ENCODE measurements at regions of chr11 and their contacts with region 1.

Region 1: DNA sequence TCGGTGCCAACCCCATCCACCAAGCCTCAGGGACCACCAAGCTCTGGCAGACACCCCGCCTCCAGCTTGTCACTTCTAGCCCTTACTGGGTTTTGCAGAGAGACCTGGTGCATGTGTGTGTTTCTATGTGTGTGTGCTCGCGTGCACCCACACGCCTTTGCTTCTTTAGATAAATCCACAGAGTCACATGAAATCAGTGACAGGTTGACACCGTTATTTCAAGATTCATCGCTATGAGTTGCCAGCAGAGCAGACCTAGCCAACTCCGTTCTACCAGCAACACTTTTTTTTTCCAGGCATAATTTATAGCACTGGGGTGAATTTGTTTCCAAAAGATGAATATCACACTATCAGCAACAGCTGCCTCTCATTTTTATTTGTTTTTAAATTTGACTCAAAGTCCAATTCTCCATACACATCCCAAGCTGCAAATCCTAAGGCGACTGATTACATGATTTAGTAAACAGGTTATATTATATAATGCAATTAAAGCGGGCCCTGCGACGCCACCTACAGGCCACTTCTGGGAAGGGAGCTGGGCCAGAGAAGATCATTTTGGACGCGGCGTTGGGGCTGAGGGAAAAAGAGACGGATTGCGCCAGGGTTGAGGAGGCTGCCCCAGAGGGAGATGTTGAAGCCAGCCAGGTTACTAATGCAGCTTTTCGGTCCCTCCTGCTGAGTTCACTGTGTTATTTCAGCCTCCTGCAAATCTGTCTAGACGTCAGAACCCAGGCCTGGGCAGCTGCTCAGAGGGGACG is 150.5 kb downstream of the FEZ1 start:
- DNase-seq: peak; percentile 82
- ATAC-seq: peak; percentile 57
- H3K4me3 Mint-ChIP-seq: no peak overlapping the region
- H3K27ac Mint-ChIP-seq: no peak overlapping the region
- H3K4me1 Mint-ChIP-seq: peaks cover 57% of the 10 kb centered on the region
- H3K27me3 Mint-ChIP-seq: peaks cover 20% of the 10 kb centered on the region
- CTCF ChIP-seq: peak; percentile 77

Region 2: GRCh38 chr11:125111343-125112207 is 234.0 kb before region 1 on chr11 and contains the start of gene TMEM218:
- CTCF ChIA-PET with region 1: interaction called, 19 read pairs
- POLR2A ChIA-PET with region 1: no interaction called
- DNase-seq: peak; percentile 98
- ATAC-seq: peak; percentile 99
- H3K4me3 Mint-ChIP-seq: peak within 1 kb of the TSS; percentile 98
- H3K27ac Mint-ChIP-seq: peak within 1 kb of the TSS; percentile 98
- H3K4me1 Mint-ChIP-seq: peaks cover 14% of the 10 kb centered on the region
- H3K27me3 Mint-ChIP-seq: no peaks in the 10 kb centered on the region; the same call in 1 of the 2 replicates
- CTCF ChIP-seq: no peak
- total RNA-seq, gene TMEM218: 10.3 to 12.4 TPM (median 11.0 TPM) in 3 replicates

Region 3: DNA sequence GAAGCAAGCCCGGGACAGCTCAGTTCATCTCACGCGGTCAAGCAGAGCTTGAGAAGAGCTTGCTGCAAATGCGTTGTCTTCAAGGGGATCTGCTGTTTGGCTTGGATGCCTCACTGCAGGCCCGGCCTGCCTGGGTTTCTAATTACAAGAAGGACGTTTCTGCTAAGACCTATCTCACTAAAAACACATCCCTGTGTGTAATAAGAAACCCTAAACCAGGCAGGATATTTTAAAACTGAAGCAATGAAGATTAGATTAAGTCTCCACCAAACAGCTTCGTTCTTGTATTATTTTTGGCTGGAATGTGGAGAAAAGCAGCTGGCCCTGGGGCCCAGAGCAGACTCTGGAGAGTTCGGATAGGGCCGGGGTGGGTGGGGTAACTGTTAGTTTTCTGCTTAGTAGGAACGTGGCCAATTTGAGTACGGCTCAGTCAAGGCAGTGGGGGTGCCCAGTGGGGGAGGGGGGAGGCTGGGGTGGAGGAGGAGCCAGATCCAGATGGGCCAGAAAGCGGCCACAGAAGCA is 175.0 kb before region 1 on chr11:
- CTCF ChIA-PET with region 1: interaction called, 75 read pairs
- POLR2A ChIA-PET with region 1: no interaction called
- DNase-seq: no peak
- ATAC-seq: peak; percentile 14
- H3K4me3 Mint-ChIP-seq: no peak overlapping the region
- H3K27ac Mint-ChIP-seq: no peak overlapping the region
- H3K4me1 Mint-ChIP-seq: peaks cover 57% of the 10 kb centered on the region
- H3K27me3 Mint-ChIP-seq: peaks cover 76% of the 10 kb centered on the region
- CTCF ChIP-seq: no peak

Region 4: DNA sequence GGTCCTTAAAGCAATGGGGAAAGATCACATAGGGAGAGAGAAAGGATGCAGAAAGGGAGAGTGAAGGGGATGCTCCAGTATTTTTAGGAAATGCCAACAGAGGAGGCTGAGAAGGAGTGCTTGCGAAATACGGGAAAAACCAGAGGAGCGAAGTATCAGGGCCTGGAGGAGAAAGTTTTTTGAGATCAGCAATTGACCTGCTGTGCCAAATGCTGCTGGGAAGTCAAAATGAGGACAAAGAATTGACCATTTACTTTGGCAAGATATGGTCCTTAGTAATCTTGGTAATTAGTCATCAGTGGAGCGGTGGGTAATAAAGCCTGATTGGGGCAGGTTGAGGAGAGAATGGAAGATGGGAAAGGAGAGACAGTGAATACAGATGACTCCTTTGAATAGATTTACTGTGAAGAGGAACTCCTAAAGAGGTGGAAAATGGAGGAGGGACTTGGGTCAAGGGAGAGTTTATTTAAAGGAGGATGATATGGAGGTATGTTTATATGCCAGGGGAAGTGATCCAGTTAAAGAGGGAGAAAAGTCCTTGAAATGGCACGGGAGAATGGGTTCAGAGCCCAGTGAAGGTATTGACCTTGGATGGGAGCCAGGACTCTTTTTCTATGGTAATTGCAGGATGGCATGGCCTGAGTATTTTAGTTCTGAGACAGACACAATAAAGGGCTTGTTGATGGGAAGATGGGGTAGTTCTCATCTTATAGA is 69.5 kb before region 1 on chr11:
- CTCF ChIA-PET with region 1: interaction called, 12 read pairs
- POLR2A ChIA-PET with region 1: no interaction called
- DNase-seq: no peak
- ATAC-seq: no peak
- H3K4me3 Mint-ChIP-seq: no peak overlapping the region
- H3K27ac Mint-ChIP-seq: no peak overlapping the region
- H3K4me1 Mint-ChIP-seq: peaks cover 8% of the 10 kb centered on the region; the same call in 1 of the 2 replicates
- H3K27me3 Mint-ChIP-seq: no peaks in the 10 kb centered on the region
- CTCF ChIP-seq: no peak

Region 5: DNA sequence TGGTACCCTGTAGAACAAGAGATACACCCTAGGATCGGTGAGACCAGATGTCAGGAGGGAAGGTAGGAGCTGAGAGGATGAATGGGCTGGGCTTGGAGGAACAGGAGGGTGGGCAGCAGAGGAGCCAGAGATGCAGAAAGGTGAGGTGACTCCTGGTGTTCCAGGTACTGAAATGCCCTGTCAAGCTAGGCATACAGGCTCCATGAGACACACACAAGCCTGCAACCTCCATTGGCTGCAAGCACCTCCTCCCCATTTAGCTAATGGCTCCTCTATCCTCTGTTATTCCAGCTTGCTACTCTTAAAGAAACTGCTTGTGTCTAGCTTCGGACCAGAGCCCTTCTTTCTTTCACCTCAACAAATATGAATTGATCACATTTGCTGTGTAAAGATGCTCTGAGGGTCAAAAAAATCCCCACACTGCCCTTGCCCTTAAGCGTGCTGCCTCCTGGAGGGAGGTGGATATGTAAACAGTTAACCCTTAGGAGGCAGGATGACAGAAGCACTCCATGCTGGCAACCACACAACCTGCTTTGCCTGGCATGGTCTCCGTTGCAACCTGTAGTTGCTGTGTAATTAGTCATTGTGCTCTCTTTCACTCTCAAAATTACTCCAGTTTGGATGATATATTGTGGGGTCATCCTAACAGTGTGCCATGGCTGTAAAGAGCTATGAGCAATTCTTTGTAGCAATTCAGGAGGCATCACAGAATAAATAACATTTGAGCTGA is 25.1 kb before region 1 on chr11:
- CTCF ChIA-PET with region 1: interaction called, 37 read pairs
- POLR2A ChIA-PET with region 1: no interaction called
- DNase-seq: no peak
- ATAC-seq: peak; percentile 73
- H3K4me3 Mint-ChIP-seq: no peak overlapping the region
- H3K27ac Mint-ChIP-seq: no peak overlapping the region
- H3K4me1 Mint-ChIP-seq: peaks cover 13% of the 10 kb centered on the region
- H3K27me3 Mint-ChIP-seq: peaks cover 19% of the 10 kb centered on the region
- CTCF ChIP-seq: no peak

Region 6: DNA sequence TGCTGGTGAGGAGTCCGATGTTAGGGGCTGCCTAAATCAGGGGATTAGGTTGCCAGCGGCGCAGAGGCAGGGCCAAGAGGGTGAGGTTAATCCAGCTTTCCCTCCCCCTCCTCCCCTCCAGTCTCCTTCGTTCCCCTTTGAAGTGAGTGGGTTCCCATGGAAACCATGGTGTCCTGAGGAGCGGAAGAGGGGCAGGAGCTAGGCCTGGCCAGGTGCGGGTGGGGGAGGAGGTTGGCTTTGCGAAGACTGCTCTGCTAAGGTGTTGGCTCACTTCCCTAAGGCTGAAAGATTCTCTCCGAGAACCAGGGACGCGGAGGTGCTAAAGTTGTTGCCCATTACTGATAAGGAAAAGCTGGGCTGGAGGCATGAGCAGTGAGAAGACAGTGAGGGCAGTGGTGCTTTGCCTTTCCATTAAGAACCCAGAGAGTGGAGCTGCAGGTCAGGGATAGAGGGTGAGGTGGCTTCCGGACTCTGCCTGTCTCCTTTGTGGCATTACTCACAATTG is 25.9 kb after region 1 on chr11:
- CTCF ChIA-PET with region 1: interaction called, 19 read pairs
- POLR2A ChIA-PET with region 1: no interaction called
- DNase-seq: peak; percentile 86
- ATAC-seq: peak; percentile 88
- H3K4me3 Mint-ChIP-seq: peak overlapping the region; percentile 64
- H3K27ac Mint-ChIP-seq: peak overlapping the region; percentile 97
- H3K4me1 Mint-ChIP-seq: peaks cover 58% of the 10 kb centered on the region
- H3K27me3 Mint-ChIP-seq: peaks cover 5% of the 10 kb centered on the region
- CTCF ChIP-seq: no peak

Region 7: GRCh38 chr11:125429166-125429707 is 83.6 kb after region 1 on chr11:
- CTCF ChIA-PET with region 1: interaction called, 52 read pairs
- POLR2A ChIA-PET with region 1: no interaction called
- DNase-seq: peak; percentile 90
- ATAC-seq: peak; percentile 66
- H3K4me3 Mint-ChIP-seq: no peak overlapping the region
- H3K27ac Mint-ChIP-seq: no peak overlapping the region
- H3K4me1 Mint-ChIP-seq: peaks cover 36% of the 10 kb centered on the region
- H3K27me3 Mint-ChIP-seq: no peaks in the 10 kb centered on the region
- CTCF ChIP-seq: peak; percentile 48

Region 8: GRCh38 chr11:125494974-125495725 is 149.6 kb after region 1 on chr11:
- CTCF ChIA-PET with region 1: no interaction called
- POLR2A ChIA-PET with region 1: no interaction called
- DNase-seq: peak; percentile 63
- ATAC-seq: peak; percentile 38
- H3K4me3 Mint-ChIP-seq: peak overlapping the region; percentile 98
- H3K27ac Mint-ChIP-seq: no peak overlapping the region
- H3K4me1 Mint-ChIP-seq: peaks cover 29% of the 10 kb centered on the region
- H3K27me3 Mint-ChIP-seq: peaks cover 27% of the 10 kb centered on the region
- CTCF ChIP-seq: no peak

Measured in WTC11 (cell line).